T-cell (primary cell): ENCODE measurements at regions of chr16 and their contacts with region 1.

Region 1: DNA sequence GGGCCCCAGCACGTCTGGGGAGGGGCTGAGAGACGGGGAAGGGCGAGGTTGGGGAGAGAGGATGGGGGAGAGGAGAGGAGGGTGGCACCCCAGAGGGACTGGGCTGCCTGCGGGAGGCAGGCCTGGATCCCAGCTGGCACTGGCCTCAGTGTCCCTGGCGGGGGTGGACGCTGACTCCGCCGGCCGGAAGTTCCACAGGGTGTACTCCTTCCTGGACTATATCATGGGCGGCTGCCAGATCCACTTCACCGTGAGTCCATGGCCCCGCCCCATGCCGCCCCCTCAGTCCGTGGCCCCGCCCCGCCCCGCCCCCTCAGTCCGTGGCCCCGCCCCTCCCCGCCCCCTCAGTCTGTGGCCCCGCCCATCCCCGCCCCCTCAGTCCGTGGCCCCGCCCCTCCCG is 11.3 kb downstream of the CPNE7 start:
- DNase-seq: peak in 3 of 35 experiments; percentile 26 to 47 (median 34)
- ATAC-seq: peak in 2 of 4 experiments; percentile 24 to 54
- H3K4me3 ChIP-seq: no peak overlapping the region
- H3K4me3 Mint-ChIP-seq: no peak overlapping the region
- H3K27ac ChIP-seq: no peak overlapping the region
- H3K27ac Mint-ChIP-seq: no peak overlapping the region
- H3K4me1 ChIP-seq: no peaks in the 10 kb centered on the region
- H3K4me1 Mint-ChIP-seq: no peaks in the 10 kb centered on the region
- H3K27me3 ChIP-seq: peaks cover 0 to 4% of the 10 kb centered on the region in 2 experiments
- H3K27me3 Mint-ChIP-seq: no peaks in the 10 kb centered on the region

Region 2: DNA sequence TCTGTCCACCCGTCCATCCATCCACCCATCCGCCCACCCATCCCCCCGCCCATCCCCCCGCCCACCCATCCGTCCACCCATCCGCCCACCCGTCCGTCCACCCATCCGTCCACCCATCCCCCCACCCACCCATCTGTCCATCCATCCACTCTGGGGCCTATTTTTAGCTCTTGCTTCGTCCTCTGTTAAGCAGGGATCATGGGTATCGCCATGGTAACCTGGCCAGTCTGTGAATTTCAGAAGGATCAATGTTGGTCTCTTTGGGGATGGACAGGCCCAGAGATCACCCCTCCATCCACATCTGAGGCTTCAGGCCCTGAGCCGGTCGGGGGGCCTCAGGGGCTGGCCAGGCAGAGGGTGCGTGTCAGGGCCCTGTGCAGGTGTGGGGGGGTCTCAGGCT is 11.3 kb after region 1 on chr16:
- CTCF ChIA-PET with region 1: no interaction called
- POLR2A ChIA-PET with region 1: interaction called in 1 of 2 experiments, 19 read pairs
- DNase-seq: no peak
- ATAC-seq: no peak
- H3K4me3 ChIP-seq: no peak overlapping the region
- H3K4me3 Mint-ChIP-seq: no peak overlapping the region
- H3K27ac ChIP-seq: no peak overlapping the region
- H3K27ac Mint-ChIP-seq: no peak overlapping the region
- H3K4me1 ChIP-seq: peaks cover 8 to 40% of the 10 kb centered on the region in 2 experiments
- H3K4me1 Mint-ChIP-seq: peaks cover 24 to 37% (median 29%) of the 10 kb centered on the region in 3 donors
- H3K27me3 ChIP-seq: peaks cover 0 to 2% of the 10 kb centered on the region in 2 experiments
- H3K27me3 Mint-ChIP-seq: no peaks in the 10 kb centered on the region

Region 3: DNA sequence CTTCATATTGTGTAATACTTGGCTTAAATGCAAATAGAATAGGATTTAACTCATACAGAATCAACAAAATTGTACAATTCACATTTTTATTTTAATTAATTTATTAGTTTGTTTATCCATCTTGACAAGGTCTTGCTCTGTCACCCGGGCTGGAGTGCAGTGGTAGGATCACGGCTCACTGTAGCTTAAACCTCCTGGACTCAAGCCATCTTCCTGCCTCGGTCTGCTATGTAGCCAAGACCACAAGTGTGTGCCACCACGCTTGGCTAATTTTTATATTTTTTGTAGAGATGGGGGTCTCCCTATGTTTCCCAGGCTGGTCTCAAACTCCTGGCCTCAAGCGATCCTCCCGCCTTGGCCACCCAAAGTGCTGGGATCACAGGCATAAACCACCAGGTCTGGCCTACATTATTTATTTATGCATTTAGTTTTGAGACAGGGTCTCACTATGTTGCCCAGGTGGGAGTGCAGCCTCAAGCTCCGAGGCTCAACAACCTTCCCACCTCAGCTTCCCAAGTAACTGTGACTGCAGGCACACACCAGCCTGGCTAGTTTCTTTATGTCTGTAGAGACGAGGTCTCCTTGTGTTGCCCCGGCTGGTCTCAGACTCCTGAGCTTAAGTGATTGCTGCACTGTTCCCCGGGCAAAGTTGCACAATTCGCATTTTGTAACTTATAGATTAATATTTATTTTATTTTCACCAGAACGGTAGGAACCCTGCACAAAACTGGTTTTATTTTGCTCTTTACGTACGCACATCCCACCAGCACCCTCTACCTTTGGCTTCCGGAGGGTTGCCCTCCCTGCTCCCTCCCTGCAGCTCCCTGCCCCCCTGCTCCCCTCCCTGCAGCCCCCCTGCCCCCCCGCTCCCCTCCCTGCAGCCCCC is 31.5 kb after region 1 on chr16:
- CTCF ChIA-PET with region 1: no interaction called
- POLR2A ChIA-PET with region 1: interaction called in 1 of 2 experiments, 10 read pairs
- DNase-seq: no peak
- ATAC-seq: no peak
- H3K4me3 ChIP-seq: no peak overlapping the region
- H3K4me3 Mint-ChIP-seq: no peak overlapping the region
- H3K27ac ChIP-seq: no peak overlapping the region
- H3K27ac Mint-ChIP-seq: no peak overlapping the region
- H3K4me1 ChIP-seq: peaks cover 3 to 32% of the 10 kb centered on the region in 2 experiments
- H3K4me1 Mint-ChIP-seq: peaks cover 11 to 13% (median 12%) of the 10 kb centered on the region in 3 donors
- H3K27me3 ChIP-seq: peaks cover 0 to 13% of the 10 kb centered on the region in 2 experiments
- H3K27me3 Mint-ChIP-seq: peaks cover under 1 to 12% of the 10 kb centered on the region in 2 donors

Region 4: GRCh38 chr16:89657442-89658220 is 70.8 kb after region 1 on chr16 and contains the starts of genes CHMP1A and SPATA33:
- CTCF ChIA-PET with region 1: no interaction called
- POLR2A ChIA-PET with region 1: no interaction called
- DNase-seq: peak; percentile 77 to 96 (median 89)
- ATAC-seq: peak; percentile 91 to 93 (median 92)
- H3K4me3 ChIP-seq: peak within 1 kb of the TSS; percentile 63 to 87
- H3K4me3 Mint-ChIP-seq: peak within 1 kb of the TSS; percentile 82 to 88 (median 82)
- H3K27ac ChIP-seq: peak within 1 kb of the TSS; percentile 57
- H3K27ac Mint-ChIP-seq: peak within 1 kb of the TSS; percentile 79 to 80
- H3K4me1 ChIP-seq: peaks cover 2 to 46% of the 10 kb centered on the region in 2 experiments
- H3K4me1 Mint-ChIP-seq: peaks cover 23 to 41% (median 33%) of the 10 kb centered on the region in 3 donors
- H3K27me3 ChIP-seq: no peaks in the 10 kb centered on the region
- H3K27me3 Mint-ChIP-seq: no peaks in the 10 kb centered on the region
- total RNA-seq, gene CHMP1A: 73.1 to 97.4 (median 90.4) TPM
- total RNA-seq, gene SPATA33: 5.0 to 11.1 (median 8.1) TPM